Thyroid gland (tissue), 4 donors: ENCODE measurements at regions of chr3 and their contacts with region 1.

Region 1: GRCh38 chr3:48151058-48151806 is 37.0 kb downstream of the CDC25A start:
- DNase-seq: peak; percentile 79 to 86
- H3K4me3 ChIP-seq: no peak overlapping the region
- H3K27ac ChIP-seq: peak overlapping the region in 1 of 3 donors; percentile 53
- H3K4me1 ChIP-seq: peaks cover 11 to 19% of the 10 kb centered on the region in 2 donors
- H3K27me3 ChIP-seq: no peaks in the 10 kb centered on the region
- CTCF ChIP-seq: peak; percentile 42 to 94 (median 85)
- POLR2A ChIP-seq: no peak

Region 2: GRCh38 chr3:47824541-47825473 is 326.4 kb before region 1 on chr3:
- intact Hi-C with region 1: loop called (anchors 5 kb)
- DNase-seq: peak; percentile 76 to 78
- H3K4me3 ChIP-seq: peak overlapping the region; percentile 67 to 84 (median 82)
- H3K27ac ChIP-seq: peak overlapping the region; percentile 58 to 87 (median 66)
- H3K4me1 ChIP-seq: peaks cover 13 to 22% of the 10 kb centered on the region in 2 donors
- H3K27me3 ChIP-seq: no peaks in the 10 kb centered on the region
- CTCF ChIP-seq: peak; percentile 18 to 91 (median 80)
- POLR2A ChIP-seq: peak in 1 of 2 donors; percentile 25

Region 3: DNA sequence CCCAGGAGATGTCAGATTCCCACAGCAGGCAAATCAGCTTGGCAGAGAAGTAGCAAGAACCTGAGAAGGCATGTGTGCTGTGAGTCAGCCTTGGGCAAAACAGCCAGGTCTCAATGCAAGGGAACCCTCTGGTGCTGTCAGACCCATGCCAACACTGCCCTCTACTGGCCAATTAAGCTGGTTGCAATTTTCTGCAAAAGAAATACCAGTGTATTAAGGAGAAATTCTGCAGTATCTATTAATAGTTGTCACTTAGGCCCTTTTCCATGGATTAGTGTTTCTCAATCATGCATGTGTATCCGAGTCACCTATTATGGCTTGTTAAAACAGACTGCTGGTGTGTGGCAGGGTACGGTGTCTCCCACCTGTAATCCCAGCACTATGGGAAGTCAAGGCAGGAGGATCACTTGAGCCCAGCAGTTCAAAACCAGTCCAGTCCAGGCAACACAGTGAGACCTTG is 161.2 kb before region 1 on chr3:
- intact Hi-C with region 1: loop called (anchors 5 kb)
- DNase-seq: peak; percentile 74 to 81
- H3K4me3 ChIP-seq: no peak overlapping the region
- H3K27ac ChIP-seq: no peak overlapping the region
- H3K4me1 ChIP-seq: peaks cover 0 to 5% of the 10 kb centered on the region in 2 donors
- H3K27me3 ChIP-seq: no peaks in the 10 kb centered on the region
- CTCF ChIP-seq: peak; percentile 73 to 91 (median 86)
- POLR2A ChIP-seq: no peak

Region 4: DNA sequence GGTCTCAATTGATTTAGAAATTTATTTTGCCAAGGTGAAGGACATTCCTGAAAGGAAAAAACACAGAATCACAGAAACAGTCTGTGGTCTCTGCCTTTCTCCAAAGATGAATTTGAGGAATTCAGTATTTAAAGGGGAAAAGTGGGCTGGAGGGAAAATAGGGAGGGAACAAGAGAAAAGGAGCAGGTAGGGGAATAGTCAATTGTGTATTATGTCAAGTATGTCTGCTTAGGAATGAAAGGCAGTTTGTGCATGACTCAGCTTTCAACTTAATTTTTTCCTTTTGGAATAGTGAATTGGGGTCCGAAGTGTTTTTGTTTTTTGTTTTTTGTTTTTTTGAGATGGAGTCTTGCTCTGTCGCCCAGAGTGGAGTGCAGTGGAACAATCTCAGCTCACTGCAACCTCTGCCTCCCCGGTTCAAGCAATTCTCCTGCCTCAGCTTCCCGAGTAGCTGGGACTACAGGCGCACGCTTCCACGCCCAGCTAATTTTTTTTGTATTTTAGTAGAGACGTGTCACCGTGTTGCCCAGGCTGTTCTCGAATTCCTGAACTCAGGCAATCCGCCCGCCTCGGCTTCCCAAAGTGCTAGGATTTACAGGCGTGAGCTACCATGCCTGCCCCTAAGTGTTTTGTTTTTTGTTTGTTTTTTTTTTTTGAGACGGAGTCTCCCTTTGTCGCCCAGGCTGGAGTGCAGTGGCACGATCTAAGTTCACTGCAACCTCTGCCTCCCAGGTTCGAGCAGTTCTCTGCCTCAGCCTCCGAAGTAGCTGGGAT is 60.9 kb before region 1 on chr3:
- intact Hi-C with region 1: loop called (anchors 10 kb)
- DNase-seq: no peak
- H3K4me3 ChIP-seq: no peak overlapping the region
- H3K27ac ChIP-seq: no peak overlapping the region
- H3K4me1 ChIP-seq: peaks cover 18 to 28% of the 10 kb centered on the region in 2 donors
- H3K27me3 ChIP-seq: no peaks in the 10 kb centered on the region
- CTCF ChIP-seq: no peak
- POLR2A ChIP-seq: no peak